OCI-LY7 (cell line): ENCODE measurements at regions of chr1 and their contacts with region 1.

Region 1: DNA sequence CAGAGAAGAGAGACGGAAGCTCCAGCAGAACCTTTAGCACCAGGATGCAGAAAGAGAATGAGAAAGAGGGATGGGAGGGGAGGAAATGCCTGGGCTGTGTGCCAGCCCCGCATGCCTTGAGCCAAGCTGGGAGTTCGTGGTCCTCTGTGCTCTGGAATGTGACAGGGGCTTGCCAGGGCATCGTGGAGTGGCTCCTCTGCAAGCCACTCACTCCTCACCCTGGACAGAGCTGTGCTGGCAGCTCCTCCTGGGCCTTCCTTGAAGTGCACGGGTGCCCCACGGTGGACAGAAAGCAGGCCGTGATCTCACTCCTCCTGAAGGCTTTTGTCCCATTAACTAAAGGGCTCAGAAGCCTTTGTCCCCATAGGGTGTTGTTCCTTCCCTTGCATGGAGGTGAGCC is 34.8 kb upstream of the PRELP start:
- DNase-seq: peak; percentile 65
- H3K4me3 ChIP-seq: no peak overlapping the region
- H3K27ac ChIP-seq: no peak overlapping the region
- H3K4me1 ChIP-seq: no peaks in the 10 kb centered on the region
- CTCF ChIP-seq: peak; percentile 63

Region 2: GRCh38 chr1:203486618-203487370 is 46.0 kb after region 1 on chr1:
- CTCF ChIA-PET with region 1: no interaction called
- POLR2A ChIA-PET with region 1: no interaction called
- intact Hi-C with region 1: loop called (anchors 5 kb)
- DNase-seq: no peak
- H3K4me3 ChIP-seq: peak overlapping the region; percentile 65
- H3K27ac ChIP-seq: no peak overlapping the region
- H3K4me1 ChIP-seq: peaks cover 11% of the 10 kb centered on the region
- CTCF ChIP-seq: no peak